Activated CD4-positive, alpha-beta T cell treated with anti-CD3 and anti-CD28 coated beads for 36 hours (primary cell): ENCODE measurements at regions of chr22 and their contacts with region 1.

Region 1: GRCh38 chr22:30968924-30969539 is at the start of gene TUG1:
- DNase-seq: peak; percentile 99
- ATAC-seq: peak; percentile 93
- H3K4me3 Mint-ChIP-seq: peak within 1 kb of the TSS; percentile 90
- H3K27ac Mint-ChIP-seq: peak within 1 kb of the TSS; percentile 95
- H3K4me1 Mint-ChIP-seq: peaks cover 51% of the 10 kb centered on the region
- H3K27me3 Mint-ChIP-seq: no peaks in the 10 kb centered on the region
- total RNA-seq, gene TUG1: 46.8 to 56.4 TPM

Region 2: GRCh38 chr22:29603358-29604075 is 1365.5 kb before region 1 on chr22 and contains the start of gene NF2:
- CTCF ChIA-PET with region 1: no interaction called
- POLR2A ChIA-PET with region 1: no interaction called
- intact Hi-C with region 1: loop called in 1 of 2 experiments (anchors 5 kb)
- DNase-seq: peak; percentile 99
- ATAC-seq: peak; percentile 97
- H3K4me3 Mint-ChIP-seq: peak within 1 kb of the TSS; percentile 92
- H3K27ac Mint-ChIP-seq: peak within 1 kb of the TSS; percentile 97
- H3K4me1 Mint-ChIP-seq: peaks cover 29% of the 10 kb centered on the region
- H3K27me3 Mint-ChIP-seq: no peaks in the 10 kb centered on the region
- total RNA-seq, gene NF2: 40.2 to 43.1 TPM

Region 3: DNA sequence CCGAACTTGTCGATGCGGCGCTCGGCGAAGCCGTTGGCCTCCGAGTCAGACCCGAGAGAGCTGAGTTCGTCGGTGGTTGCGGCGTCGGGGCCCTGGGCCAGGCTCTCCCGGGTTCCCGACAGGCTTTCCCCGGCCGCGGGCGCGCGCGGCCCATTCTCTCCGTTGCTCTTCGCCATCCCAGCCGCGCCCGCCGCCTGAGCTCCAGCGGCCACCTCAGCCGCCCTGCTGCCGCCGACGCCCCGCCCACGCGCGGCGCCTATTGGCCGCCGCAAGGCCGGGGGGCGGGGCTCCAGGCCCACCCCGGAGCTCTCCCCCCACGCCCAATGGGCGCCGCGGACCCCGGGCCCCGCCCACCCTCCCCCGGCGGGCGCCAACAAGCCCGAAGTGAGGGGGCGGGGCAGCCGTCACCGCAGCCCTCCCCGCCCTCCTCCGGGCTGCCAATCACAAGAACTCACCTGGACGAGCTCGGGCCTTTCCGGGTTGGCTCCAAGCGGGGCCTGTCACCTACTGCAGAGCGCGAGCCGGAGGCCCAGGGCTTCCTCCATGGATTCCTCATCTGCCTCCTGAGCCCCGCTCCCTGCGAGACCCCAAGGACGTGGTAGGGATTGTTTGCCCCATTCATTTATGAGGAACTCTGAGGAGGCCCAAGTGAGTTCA is 642.2 kb before region 1 on chr22 and contains the start of gene TBC1D10A:
- CTCF ChIA-PET with region 1: no interaction called
- POLR2A ChIA-PET with region 1: no interaction called
- intact Hi-C with region 1: loop called in 1 of 2 experiments (anchors 1 kb)
- DNase-seq: peak; percentile 97
- ATAC-seq: peak; percentile 87
- H3K4me3 Mint-ChIP-seq: peak within 1 kb of the TSS; percentile 82
- H3K27ac Mint-ChIP-seq: peak within 1 kb of the TSS; percentile 89
- H3K4me1 Mint-ChIP-seq: peaks cover 45% of the 10 kb centered on the region
- H3K27me3 Mint-ChIP-seq: no peaks in the 10 kb centered on the region
- total RNA-seq, gene TBC1D10A: 20.1 to 21.6 TPM

Region 4: DNA sequence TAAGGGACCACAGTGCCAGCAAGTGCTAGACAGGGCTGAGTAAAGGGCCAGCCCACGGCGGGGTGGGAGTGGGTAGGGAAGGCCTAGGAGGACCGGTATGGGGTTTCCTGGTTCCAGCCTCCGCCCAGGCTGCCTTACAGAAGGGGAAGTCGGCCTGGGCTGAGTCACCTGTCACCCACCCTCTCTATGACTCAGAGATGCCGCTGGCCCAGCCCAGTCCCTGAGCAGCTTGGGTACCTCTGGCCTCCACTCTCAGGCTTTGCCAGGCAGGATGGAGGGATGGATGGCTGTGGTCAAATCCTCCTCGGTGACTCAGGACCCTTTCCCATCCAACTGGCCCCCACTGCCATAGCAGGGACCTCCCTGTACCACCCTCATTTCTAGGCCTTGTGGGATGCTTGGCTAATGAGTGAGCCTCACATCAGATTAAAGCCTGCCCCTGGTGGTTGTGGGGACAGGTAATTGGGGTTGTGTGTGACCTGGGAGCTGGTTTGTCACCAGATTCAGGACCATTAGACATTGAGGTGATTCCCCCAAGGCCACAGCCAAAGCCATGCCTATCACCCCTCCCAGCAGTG is 319.5 kb before region 1 on chr22:
- CTCF ChIA-PET with region 1: no interaction called
- POLR2A ChIA-PET with region 1: no interaction called
- intact Hi-C with region 1: loop called in 1 of 2 experiments (anchors 2 kb)
- DNase-seq: peak; percentile 95
- ATAC-seq: peak; percentile 99
- H3K4me3 Mint-ChIP-seq: no peak overlapping the region
- H3K27ac Mint-ChIP-seq: peak overlapping the region; percentile 75
- H3K4me1 Mint-ChIP-seq: peaks cover 32% of the 10 kb centered on the region
- H3K27me3 Mint-ChIP-seq: no peaks in the 10 kb centered on the region

Region 5: DNA sequence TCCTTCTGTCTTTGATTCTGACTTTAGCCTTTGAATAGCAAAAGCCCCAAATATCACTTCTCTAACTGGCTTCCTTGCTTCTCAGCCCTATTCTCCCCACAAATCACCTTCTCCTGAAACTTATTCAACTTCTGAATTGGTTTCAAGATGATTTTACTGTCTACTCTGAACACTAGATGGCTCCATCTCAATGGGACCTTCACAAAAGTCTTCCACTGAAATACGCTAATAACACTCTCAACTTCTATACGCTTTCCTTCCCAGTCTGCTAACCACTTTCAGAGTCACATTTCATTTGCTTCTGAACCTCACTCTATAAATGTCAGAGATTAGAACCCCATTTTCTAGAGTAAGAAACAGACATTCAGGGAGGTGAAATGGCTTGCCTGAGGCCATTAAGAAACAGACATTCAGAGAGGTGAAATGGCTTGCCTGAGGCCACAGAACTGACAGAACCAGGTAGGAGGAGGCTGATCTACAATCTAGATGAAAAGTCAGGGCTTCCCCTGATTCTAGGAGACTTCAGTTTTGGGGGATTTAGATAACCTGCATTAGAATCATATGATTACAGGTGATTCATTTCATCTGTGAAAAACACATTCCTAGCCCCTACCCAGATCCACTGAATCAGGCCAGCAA is 21.1 kb before region 1 on chr22:
- CTCF ChIA-PET with region 1: interaction called, 11 read pairs
- POLR2A ChIA-PET with region 1: interaction called, 3 read pairs
- intact Hi-C with region 1: no loop called
- DNase-seq: no peak
- ATAC-seq: peak; percentile 65
- H3K4me3 Mint-ChIP-seq: no peak overlapping the region
- H3K27ac Mint-ChIP-seq: no peak overlapping the region
- H3K4me1 Mint-ChIP-seq: peaks cover 47% of the 10 kb centered on the region
- H3K27me3 Mint-ChIP-seq: no peaks in the 10 kb centered on the region

Region 6: DNA sequence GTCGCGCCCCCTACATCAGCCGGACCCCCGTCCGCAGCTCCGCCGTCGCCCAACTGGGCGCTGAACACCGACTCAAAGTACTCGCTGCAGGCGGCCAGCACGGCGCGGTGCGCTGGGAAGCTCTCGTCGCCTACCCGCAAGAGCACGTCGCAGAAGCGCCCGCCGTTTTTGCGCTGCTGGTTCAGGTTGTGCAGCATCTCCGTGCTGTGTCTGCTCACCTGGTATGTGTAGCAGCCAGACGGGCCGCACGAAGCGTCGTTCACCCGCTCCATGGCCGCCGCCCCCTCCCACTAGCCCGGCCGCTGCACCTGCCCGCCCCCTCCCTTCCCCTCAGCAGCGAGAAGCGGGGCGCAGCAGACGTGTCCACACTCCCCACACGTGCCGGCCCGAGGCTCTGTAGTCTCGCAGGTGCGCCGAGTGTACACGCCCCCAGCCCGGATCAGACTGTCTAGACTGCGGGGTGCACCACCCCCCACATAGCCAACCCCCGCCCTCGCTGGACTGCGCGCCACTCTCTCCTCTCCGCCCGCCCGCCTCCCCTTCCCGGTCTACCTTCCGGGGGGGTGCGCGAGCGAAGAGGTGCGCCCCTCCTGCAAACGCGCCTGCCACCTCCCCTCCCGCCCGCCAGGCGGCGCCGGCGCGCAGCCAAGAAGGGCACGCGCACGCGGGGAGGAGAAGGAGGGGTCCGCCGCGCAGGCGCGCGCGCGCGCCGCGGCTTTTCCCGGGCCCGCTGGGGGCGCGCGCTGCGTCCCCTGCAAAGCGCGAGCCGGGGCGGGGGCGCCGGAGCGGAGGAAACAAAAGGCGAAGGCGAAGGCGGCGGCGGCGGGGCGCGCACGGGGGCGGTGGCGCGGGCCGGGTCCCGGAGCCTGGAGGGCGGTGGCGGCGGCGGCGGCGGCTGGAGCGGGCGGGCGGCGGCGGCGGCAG is 376.6 kb after region 1 on chr22:
- CTCF ChIA-PET with region 1: no interaction called
- POLR2A ChIA-PET with region 1: interaction called, 3 read pairs
- intact Hi-C with region 1: loop called in 1 of 2 experiments (anchors 1 kb)
- DNase-seq: peak; percentile 93
- ATAC-seq: peak; percentile 59
- H3K4me3 Mint-ChIP-seq: peak overlapping the region; percentile 90
- H3K27ac Mint-ChIP-seq: peak overlapping the region; percentile 92
- H3K4me1 Mint-ChIP-seq: peaks cover 44% of the 10 kb centered on the region
- H3K27me3 Mint-ChIP-seq: no peaks in the 10 kb centered on the region

Region 7: DNA sequence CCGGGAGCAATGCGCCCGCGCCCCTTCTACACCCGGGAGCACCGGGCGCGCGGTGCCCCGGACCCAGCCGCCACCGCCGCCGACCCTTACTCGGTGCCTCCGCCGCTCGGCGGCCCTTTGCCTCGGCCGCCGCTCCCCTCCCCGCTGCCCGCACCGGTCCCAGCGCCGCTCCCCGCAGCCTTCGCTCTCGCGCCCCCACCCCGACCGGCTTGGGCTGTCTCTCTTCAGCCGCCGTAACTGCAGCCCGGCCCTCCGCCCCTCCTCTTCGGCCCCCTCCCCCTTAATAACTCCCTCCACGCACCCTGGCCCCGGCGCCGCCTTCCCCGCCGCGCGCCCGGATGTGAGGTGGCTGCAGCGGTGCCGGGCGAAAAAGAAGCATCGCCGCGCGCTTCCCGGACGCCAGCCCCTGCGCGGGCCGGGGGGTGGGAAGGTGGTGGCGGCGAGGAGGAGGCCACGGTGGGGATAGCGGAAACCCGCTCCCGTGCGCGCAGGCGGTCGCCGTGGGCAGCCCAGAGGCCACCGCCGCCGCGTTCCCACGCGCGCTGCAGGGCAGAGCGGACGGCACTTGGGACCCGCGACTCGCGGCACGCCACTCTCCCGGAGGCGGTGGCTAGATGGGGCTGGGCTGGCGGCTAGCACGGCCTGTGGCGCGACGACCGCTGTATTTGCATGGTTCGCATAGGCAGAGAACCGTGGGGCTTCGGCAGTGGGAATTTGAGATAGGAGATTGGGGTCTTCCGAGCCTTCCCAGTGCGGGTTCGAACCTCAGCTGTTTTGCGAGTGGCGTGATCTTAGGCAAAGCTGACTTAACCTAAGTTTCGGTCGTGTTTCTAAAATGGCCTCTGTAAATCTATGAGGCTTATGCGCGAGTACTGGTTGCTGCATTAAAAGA is 520.8 kb after region 1 on chr22 and contains the start of gene EIF4ENIF1:
- CTCF ChIA-PET with region 1: no interaction called
- POLR2A ChIA-PET with region 1: no interaction called
- intact Hi-C with region 1: loop called in 1 of 2 experiments (anchors 2 kb)
- DNase-seq: peak; percentile 92
- ATAC-seq: peak; percentile 75
- H3K4me3 Mint-ChIP-seq: peak within 1 kb of the TSS; percentile 86
- H3K27ac Mint-ChIP-seq: peak within 1 kb of the TSS; percentile 99
- H3K4me1 Mint-ChIP-seq: peaks cover 46% of the 10 kb centered on the region
- H3K27me3 Mint-ChIP-seq: no peaks in the 10 kb centered on the region
- total RNA-seq, gene EIF4ENIF1: 45.4 to 75.0 TPM